Activated CD4-positive, alpha-beta T cell treated with anti-CD3 and anti-CD28 coated beads, Interleukin-2, amount 10 ng/mL, durations not matched to agents 24 days and 14 days (primary cell): ENCODE measurements at regions of chr1 and their contacts with region 1.

Region 1: DNA sequence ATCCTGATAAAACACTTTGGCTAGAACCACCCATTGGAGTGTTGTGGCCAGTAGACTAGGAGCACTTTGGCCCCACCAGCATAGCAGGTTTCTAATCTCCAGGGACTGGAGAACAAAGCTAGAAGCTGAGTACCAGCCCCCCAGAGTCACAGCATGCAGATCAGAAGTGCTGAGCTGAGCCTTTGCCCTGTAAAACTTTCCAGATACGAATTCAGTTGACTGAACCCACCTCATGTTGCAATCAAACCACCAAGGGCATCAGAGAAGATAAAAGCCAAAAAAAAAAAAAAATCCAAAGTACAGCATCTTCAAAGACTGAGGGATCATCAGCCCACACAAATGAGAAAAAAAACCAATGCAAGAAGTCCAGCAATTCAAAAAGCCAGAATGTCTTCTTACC is 8.7 kb upstream of the CD53 start:
- DNase-seq: no peak
- H3K4me3 Mint-ChIP-seq: no peak overlapping the region
- H3K27ac Mint-ChIP-seq: no peak overlapping the region
- H3K4me1 Mint-ChIP-seq: peaks cover 13% of the 10 kb centered on the region
- H3K27me3 Mint-ChIP-seq: no peaks in the 10 kb centered on the region

Region 2: GRCh38 chr1:110896090-110896489 is 31.8 kb after region 1 on chr1:
- intact Hi-C with region 1: loop called (anchors 5 kb)
- DNase-seq: peak; percentile 76
- H3K4me3 Mint-ChIP-seq: peak overlapping the region; percentile 57
- H3K27ac Mint-ChIP-seq: peak overlapping the region; percentile 89
- H3K4me1 Mint-ChIP-seq: peaks cover 73% of the 10 kb centered on the region
- H3K27me3 Mint-ChIP-seq: no peaks in the 10 kb centered on the region